Activated CD4-positive, alpha-beta T cell treated with anti-CD3 and anti-CD28 coated beads for 36 hours (primary cell): ENCODE measurements at regions of chr11 and their contacts with region 1.

Region 1: GRCh38 chr11:123054301-123055065 is 7.5 kb downstream of the HSPA8 start:
- DNase-seq: no peak
- ATAC-seq: peak; percentile 76
- H3K4me3 Mint-ChIP-seq: no peak overlapping the region
- H3K27ac Mint-ChIP-seq: peak overlapping the region; percentile 97
- H3K4me1 Mint-ChIP-seq: peaks cover 32% of the 10 kb centered on the region
- H3K27me3 Mint-ChIP-seq: no peaks in the 10 kb centered on the region

Region 2: DNA sequence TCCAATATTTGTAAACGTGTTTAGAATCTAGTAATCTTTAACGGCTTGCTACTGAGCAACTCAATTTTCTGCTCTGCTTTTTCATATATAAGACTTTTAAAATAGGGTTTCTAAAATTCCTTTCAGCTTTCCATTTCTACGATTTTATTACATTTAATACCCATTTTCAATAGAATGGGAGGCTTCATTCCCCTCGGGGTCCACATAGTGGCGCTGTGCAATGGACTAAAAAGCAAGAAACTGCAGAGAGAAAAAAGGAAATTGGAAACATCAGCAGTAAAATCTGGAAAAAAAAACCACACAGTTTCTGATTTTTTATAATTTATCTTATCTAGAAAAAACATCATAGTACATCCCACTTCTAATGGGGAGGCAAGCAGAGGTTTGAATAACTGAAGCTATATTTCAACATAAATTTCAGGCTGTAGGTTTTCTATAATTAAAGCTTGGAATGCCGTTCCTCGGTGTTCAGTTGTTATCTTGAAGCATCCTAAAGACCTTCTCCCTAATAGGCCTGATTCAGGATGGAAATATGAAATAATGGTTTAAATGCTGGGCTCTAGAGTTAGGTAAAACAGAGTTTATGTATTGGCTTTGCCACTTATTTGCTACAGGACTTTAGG is 190.7 kb before region 1 on chr11:
- CTCF ChIA-PET with region 1: interaction called, 46 read pairs
- POLR2A ChIA-PET with region 1: interaction called, 3 read pairs
- intact Hi-C with region 1: loop called in 1 of 2 experiments (anchors 1 kb)
- DNase-seq: peak; percentile 71
- ATAC-seq: no peak
- H3K4me3 Mint-ChIP-seq: no peak overlapping the region
- H3K27ac Mint-ChIP-seq: no peak overlapping the region
- H3K4me1 Mint-ChIP-seq: no peaks in the 10 kb centered on the region
- H3K27me3 Mint-ChIP-seq: peaks cover 5% of the 10 kb centered on the region

Region 3: GRCh38 chr11:122981388-122982264 is 72.9 kb before region 1 on chr11 and contains the start of gene BSX:
- CTCF ChIA-PET with region 1: interaction called, 5 read pairs
- POLR2A ChIA-PET with region 1: no interaction called
- intact Hi-C with region 1: loop called in 1 of 2 experiments (anchors 2 kb)
- DNase-seq: peak; percentile 75
- ATAC-seq: peak; percentile 74
- H3K4me3 Mint-ChIP-seq: no peak within 1 kb of the TSS
- H3K27ac Mint-ChIP-seq: no peak within 1 kb of the TSS
- H3K4me1 Mint-ChIP-seq: peaks cover 29% of the 10 kb centered on the region
- H3K27me3 Mint-ChIP-seq: peaks cover 79% of the 10 kb centered on the region
- total RNA-seq, gene BSX: not detected

Region 4: DNA sequence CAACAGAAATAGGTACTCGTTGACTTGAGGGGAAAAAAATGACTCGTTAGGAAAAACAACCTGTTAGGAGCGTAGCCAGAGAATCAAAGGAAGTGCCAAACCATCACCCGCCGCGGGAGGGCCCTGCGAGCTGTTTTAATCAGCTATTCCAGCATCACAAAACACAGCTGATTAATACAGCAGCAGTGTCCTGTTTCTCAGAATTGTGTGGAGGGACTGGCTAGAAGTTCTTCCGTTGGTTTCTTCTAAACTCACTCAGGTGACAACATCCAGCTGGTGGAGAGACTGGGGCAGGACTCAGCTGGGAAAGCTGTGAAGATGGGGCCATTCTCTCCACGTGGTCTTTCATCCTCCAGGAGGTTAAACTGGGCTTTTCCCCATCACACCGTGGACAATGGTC is 20.6 kb before region 1 on chr11:
- CTCF ChIA-PET with region 1: interaction called, 16 read pairs
- POLR2A ChIA-PET with region 1: no interaction called
- intact Hi-C with region 1: no loop called
- DNase-seq: peak; percentile 41
- ATAC-seq: no peak
- H3K4me3 Mint-ChIP-seq: no peak overlapping the region
- H3K27ac Mint-ChIP-seq: no peak overlapping the region
- H3K4me1 Mint-ChIP-seq: no peaks in the 10 kb centered on the region
- H3K27me3 Mint-ChIP-seq: no peaks in the 10 kb centered on the region

Region 5: GRCh38 chr11:123103326-123103980 is 49.0 kb after region 1 on chr11:
- CTCF ChIA-PET with region 1: interaction called, 21 read pairs
- POLR2A ChIA-PET with region 1: interaction called, 5 read pairs
- intact Hi-C with region 1: no loop called
- DNase-seq: peak; percentile 46
- ATAC-seq: peak; percentile 77
- H3K4me3 Mint-ChIP-seq: no peak overlapping the region
- H3K27ac Mint-ChIP-seq: no peak overlapping the region
- H3K4me1 Mint-ChIP-seq: peaks cover 24% of the 10 kb centered on the region
- H3K27me3 Mint-ChIP-seq: no peaks in the 10 kb centered on the region